BJ (cell line): ENCODE measurements at regions of chr14 and their contacts with region 1.

Region 1: GRCh38 chr14:66624299-66624937 is 116.5 kb downstream of the GPHN start:
- DNase-seq: no peak
- H3K4me3 ChIP-seq: no peak overlapping the region
- H3K27me3 ChIP-seq: no peaks in the 10 kb centered on the region
- CTCF ChIP-seq: peak; percentile 81

Region 2: GRCh38 chr14:65937079-65937959 is 687.1 kb before region 1 on chr14:
- CTCF ChIA-PET with region 1: no interaction called
- POLR2A ChIA-PET with region 1: no interaction called
- DNase-seq: no peak
- H3K4me3 ChIP-seq: no peak overlapping the region
- H3K27me3 ChIP-seq: no peaks in the 10 kb centered on the region
- CTCF ChIP-seq: no peak

Region 3: DNA sequence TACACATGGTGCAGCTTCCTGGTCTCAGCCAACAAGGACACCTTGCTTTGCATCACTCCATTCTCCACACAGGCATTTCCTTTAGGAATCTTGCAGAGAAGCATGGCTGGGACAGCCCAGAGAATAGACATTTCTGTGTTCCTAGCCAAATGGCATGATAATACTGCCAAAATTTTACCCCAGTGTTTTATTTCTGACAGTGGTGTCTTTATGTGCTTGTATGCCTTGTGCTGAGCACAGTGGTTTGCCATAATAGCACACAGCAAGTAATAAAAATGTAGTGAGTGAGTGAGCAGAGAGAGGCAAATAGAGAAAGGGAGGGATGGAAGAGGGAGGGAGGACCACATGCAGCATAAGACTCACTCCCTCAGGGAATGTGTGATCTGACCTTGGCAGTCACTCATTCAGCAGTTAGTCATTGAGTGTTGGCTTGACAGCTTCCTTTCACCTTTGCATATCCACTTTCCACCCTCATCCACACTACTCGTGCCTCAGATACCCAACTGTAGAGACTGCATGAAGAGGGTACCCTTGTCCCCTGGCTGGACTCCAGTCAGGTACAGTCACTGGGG is 351.1 kb before region 1 on chr14:
- CTCF ChIA-PET with region 1: no interaction called
- POLR2A ChIA-PET with region 1: no interaction called
- DNase-seq: no peak
- H3K4me3 ChIP-seq: no peak overlapping the region
- H3K27me3 ChIP-seq: no peaks in the 10 kb centered on the region
- CTCF ChIP-seq: no peak

Region 4: GRCh38 chr14:66507722-66508546 is 116.5 kb before region 1 on chr14 and contains the start of gene GPHN:
- CTCF ChIA-PET with region 1: no interaction called
- POLR2A ChIA-PET with region 1: interaction called, 11 read pairs
- DNase-seq: peak; percentile 92
- H3K4me3 ChIP-seq: peak within 1 kb of the TSS; percentile 85
- H3K27me3 ChIP-seq: no peaks in the 10 kb centered on the region
- CTCF ChIP-seq: peak; percentile 52
- polyA plus RNA-seq, gene GPHN: 7.2 and 7.7 TPM in 2 replicates

Region 5: DNA sequence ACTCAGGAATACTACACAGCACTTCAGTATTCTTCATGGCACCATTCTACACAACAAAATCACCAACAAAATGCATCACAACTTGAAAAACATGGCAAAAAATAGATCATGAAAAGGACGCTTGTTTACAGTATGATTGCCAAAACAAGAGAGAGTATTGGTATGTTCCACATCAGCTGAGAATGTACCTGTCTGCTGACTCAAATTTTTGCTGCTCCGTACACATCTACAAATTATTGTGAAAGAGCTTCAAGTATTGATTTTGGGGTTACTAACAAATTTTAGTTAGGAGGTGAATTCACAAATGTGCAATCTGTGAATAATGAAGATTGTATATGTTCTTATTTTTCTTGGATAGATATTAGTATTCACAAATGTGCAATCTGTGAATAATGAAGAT is 11.1 kb before region 1 on chr14:
- CTCF ChIA-PET with region 1: interaction called, 16 read pairs
- POLR2A ChIA-PET with region 1: no interaction called
- DNase-seq: no peak
- H3K4me3 ChIP-seq: no peak overlapping the region
- H3K27me3 ChIP-seq: no peaks in the 10 kb centered on the region
- CTCF ChIP-seq: no peak

Region 6: DNA sequence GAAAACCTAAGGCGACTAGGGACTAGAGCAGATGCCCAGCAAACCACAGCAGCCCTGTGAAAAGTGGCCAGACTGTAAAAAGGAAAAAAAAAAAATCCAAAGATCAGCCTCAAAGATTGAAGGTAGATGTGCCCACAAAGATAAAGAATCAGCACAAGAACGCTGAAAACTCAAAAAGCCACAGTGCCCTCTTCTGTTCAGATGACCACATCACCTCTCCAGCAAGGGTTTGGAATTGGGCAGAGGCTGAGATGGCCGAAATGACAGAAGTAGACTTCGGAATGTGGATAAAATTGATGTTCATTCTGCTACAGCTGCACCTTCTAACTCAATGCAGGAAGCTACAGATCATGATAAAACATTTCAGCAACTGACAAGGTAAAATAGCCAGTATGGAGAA is 38.0 kb after region 1 on chr14:
- CTCF ChIA-PET with region 1: interaction called, 16 read pairs
- POLR2A ChIA-PET with region 1: interaction called, 13 read pairs
- DNase-seq: no peak
- H3K4me3 ChIP-seq: no peak overlapping the region
- H3K27me3 ChIP-seq: no peaks in the 10 kb centered on the region
- CTCF ChIP-seq: peak; percentile 52

Region 7: GRCh38 chr14:66746316-66747006 is 122.0 kb after region 1 on chr14:
- CTCF ChIA-PET with region 1: interaction called, 11 read pairs
- POLR2A ChIA-PET with region 1: no interaction called
- DNase-seq: no peak
- H3K4me3 ChIP-seq: no peak overlapping the region
- H3K27me3 ChIP-seq: no peaks in the 10 kb centered on the region
- CTCF ChIP-seq: peak; percentile 70

Region 8: DNA sequence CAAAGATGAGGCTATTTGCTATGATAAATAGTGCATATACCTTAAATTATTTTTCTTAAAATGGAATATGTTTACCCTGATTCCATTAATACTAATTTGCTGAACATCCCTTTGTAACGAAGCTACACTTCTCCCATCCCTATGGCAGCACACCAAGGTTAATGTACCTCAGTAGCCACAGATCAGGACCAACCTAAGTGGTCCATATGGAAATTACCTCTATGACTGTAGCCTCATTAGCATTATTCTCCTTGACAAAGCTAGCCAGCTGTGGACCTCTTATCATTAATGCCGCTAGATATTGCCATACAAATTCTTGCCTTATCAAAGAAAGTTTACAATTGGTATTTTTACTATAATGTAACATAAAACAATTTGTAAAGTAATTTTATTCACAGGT is 487.9 kb after region 1 on chr14:
- CTCF ChIA-PET with region 1: interaction called, 13 read pairs
- POLR2A ChIA-PET with region 1: no interaction called
- DNase-seq: no peak
- H3K4me3 ChIP-seq: no peak overlapping the region
- H3K27me3 ChIP-seq: no peaks in the 10 kb centered on the region
- CTCF ChIP-seq: no peak